Activated T-helper 2 cell treated with anti-CD3 and anti-CD28 coated beads, Interferon-gamma antibody, Interleukin-2, Interleukin-4, amounts not matched to agents 10 μg/mL and 5 μg/mL and 100 μg/mL, durations not matched to agents 14 hours and 24 hours and 36 hours (primary cell): ENCODE measurements at regions of chr3 and their contacts with region 1.

Region 1: GRCh38 chr3:31213869-31214486 is 318.7 kb upstream of the STT3B start:
- DNase-seq: peak; percentile 52
- H3K4me3 Mint-ChIP-seq: peak overlapping the region; percentile 0
- H3K27ac Mint-ChIP-seq: peak overlapping the region; percentile 0
- H3K4me1 Mint-ChIP-seq: peaks cover 60% of the 10 kb centered on the region
- H3K27me3 Mint-ChIP-seq: no peaks in the 10 kb centered on the region

Region 2: DNA sequence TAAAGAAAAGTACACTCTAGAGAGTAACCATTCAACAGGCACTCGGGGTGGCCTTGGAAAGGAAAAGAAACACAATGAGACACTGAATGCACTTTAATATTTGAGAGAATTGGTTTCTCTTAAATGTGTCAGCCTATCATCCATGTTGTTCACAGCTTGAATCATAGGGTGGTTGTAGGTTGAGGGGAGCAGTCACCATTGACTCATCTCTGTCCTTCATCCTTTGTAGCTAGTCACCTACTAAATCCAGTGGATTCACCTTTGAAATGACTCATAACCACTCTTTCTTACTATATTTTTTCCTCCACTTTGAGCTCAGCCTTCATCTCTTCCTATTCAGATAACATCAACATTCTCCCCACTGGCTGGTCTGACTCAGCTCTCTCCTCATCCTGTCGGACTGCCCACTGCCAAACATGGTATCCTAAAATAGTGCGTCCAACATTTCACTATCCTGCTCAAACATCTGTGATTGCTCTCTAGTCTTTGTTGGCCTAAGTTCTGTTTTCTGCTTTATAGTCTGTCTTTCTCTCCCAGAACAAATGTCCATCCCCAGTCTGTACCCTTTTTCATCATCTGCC is 136.9 kb before region 1 on chr3:
- intact Hi-C with region 1: loop called (anchors 5 kb)
- DNase-seq: peak; percentile 18
- H3K4me3 Mint-ChIP-seq: no peak overlapping the region
- H3K27ac Mint-ChIP-seq: peak overlapping the region; percentile 52
- H3K4me1 Mint-ChIP-seq: peaks cover 34% of the 10 kb centered on the region
- H3K27me3 Mint-ChIP-seq: peaks cover 7% of the 10 kb centered on the region

Region 3: DNA sequence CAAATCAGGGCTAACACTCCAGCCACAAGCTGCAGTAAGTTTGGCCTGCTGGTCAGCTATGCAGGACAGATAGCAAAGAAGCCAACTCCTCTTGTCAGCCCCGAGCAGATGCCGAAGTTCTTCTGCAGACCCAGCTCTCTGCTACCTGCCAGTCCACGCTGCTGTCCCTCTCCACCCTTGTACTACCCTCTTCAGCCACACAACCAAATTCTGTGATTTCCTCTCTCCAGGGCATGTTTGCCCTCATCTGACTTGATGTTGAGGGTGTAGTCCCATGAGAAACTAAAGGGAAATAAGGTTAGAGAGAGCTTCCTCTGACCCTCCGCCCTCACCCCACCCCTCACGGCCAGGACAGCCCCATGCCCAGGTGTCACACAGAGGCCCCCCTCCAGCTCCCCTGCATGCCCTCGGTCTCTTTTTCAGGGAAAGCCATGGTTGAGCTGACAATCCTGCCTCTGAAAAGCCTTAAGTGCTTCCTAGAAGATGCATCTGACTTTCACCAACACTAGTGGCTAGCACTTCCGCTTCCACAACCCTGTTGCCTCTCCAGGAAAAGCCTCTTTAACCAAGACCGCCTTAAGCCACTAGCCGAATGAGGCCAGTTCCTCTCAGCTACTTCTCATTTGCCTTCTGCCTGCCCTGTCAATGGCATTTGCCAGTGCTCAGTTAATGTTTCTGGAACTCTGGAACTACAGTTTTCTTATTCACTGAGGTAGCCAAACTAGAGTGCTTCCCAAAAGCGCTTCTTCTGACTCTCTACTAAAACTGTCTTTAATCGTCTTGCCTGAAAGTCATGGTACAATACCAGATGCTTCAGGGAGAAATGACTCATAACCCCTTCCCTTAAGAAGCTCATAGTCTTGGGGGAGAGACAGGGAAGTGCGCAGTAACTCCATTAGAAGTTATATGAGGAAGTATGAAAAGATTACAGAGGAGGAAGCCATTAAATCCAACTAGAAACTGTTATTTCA is 18.4 kb after region 1 on chr3:
- intact Hi-C with region 1: loop called (anchors 1 kb)
- DNase-seq: no peak
- H3K4me3 Mint-ChIP-seq: no peak overlapping the region
- H3K27ac Mint-ChIP-seq: no peak overlapping the region
- H3K4me1 Mint-ChIP-seq: peaks cover 53% of the 10 kb centered on the region
- H3K27me3 Mint-ChIP-seq: peaks cover 8% of the 10 kb centered on the region

Region 4: GRCh38 chr3:31288641-31289100 is 74.7 kb after region 1 on chr3:
- intact Hi-C with region 1: loop called (anchors 5 kb)
- DNase-seq: peak; percentile 37
- H3K4me3 Mint-ChIP-seq: peak overlapping the region; percentile 37
- H3K27ac Mint-ChIP-seq: peak overlapping the region; percentile 43
- H3K4me1 Mint-ChIP-seq: peaks cover 38% of the 10 kb centered on the region
- H3K27me3 Mint-ChIP-seq: no peaks in the 10 kb centered on the region

Region 5: DNA sequence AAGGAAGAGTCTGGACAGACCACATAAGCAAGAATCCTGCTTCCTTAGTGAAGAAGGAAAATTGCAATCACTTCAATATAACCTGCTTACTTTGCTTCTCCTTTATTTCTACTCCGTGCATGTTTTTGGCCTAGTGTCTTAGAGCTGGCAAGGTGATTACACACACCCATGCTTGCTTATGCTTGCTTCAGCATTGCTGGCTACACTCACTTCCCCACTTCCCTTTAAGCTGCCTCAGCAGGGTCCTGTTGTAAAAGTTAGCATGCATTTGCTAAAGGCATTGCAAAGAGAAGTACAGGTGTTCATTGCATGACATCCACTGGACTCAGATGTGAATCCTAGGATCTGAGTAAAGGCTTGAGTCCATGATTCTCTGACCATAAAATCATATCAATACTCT is 271.2 kb after region 1 on chr3:
- intact Hi-C with region 1: no loop called
- DNase-seq: no peak
- H3K4me3 Mint-ChIP-seq: no peak overlapping the region
- H3K27ac Mint-ChIP-seq: no peak overlapping the region
- H3K4me1 Mint-ChIP-seq: no peaks in the 10 kb centered on the region
- H3K27me3 Mint-ChIP-seq: peaks cover 8% of the 10 kb centered on the region